Left lung (tissue), 14 donors: ENCODE measurements at regions of chr17 and their contacts with region 1.

Region 1: GRCh38 chr17:71003736-71004135 is 834.4 kb downstream of the KCNJ2 start:
- DNase-seq: no peak
- ATAC-seq: no peak
- H3K4me3 ChIP-seq: no peak overlapping the region
- H3K27ac ChIP-seq: no peak overlapping the region
- H3K4me1 ChIP-seq: no peaks in the 10 kb centered on the region
- H3K27me3 ChIP-seq: no peaks in the 10 kb centered on the region
- CTCF ChIP-seq: no peak

Region 2: DNA sequence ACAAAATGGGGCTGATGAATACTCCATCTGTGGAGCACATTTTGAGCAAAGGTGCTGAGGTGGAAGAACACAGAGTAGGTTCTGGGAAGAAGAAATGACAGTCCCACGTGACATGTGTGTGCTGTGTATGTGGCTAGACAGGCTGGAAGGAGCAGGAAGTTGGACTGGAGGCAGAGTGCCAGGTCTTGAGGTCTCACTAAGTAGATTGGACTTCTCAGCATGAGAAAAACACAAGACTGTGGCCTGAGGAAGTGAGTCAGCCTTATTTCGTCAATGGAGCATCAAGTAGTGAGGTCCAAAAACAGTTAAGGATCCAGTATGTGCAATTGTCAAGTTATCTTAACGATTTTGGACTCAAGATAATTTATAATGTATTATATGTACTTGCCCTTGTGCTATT is 97.9 kb before region 1 on chr17:
- intact Hi-C with region 1: no loop called
- DNase-seq: peak in 2 of 4 donors; percentile 43 to 56
- ATAC-seq: peak; percentile 67
- H3K4me3 ChIP-seq: no peak overlapping the region
- H3K27ac ChIP-seq: no peak overlapping the region
- H3K4me1 ChIP-seq: no peaks in the 10 kb centered on the region
- H3K27me3 ChIP-seq: no peaks in the 10 kb centered on the region
- CTCF ChIP-seq: no peak

Region 3: GRCh38 chr17:70945386-70945785 is 58.4 kb before region 1 on chr17:
- intact Hi-C with region 1: loop called in 1 of 2 experiments (anchors 10 kb)
- DNase-seq: peak in 1 of 4 donors; percentile 5
- ATAC-seq: no peak
- H3K4me3 ChIP-seq: no peak overlapping the region
- H3K27ac ChIP-seq: no peak overlapping the region
- H3K4me1 ChIP-seq: no peaks in the 10 kb centered on the region
- H3K27me3 ChIP-seq: no peaks in the 10 kb centered on the region
- CTCF ChIP-seq: no peak